ENCODE measurements at regions of chr12 and their contacts with region 1.

Region 1: GRCh38 chr12:67578976-67579661 is 69.4 kb upstream of the DYRK2 start:
- DNase-seq: peak in 6 of 14 experiments; percentile 4 to 88 (median 46)
- ATAC-seq: peak; percentile 79
- H3K4me3 ChIP-seq: peak overlapping the region; percentile 1
- H3K4me3 Mint-ChIP-seq: peak overlapping the region; percentile 58
- H3K27ac ChIP-seq: peak overlapping the region in 1 of 2 donors; percentile 32
- H3K27ac Mint-ChIP-seq: peak overlapping the region; percentile 22
- H3K4me1 ChIP-seq: peaks cover 22% of the 10 kb centered on the region
- H3K4me1 Mint-ChIP-seq: peaks cover 63% of the 10 kb centered on the region
- H3K27me3 ChIP-seq: no peaks in the 10 kb centered on the region
- H3K27me3 Mint-ChIP-seq: no peaks in the 10 kb centered on the region
- CTCF ChIP-seq: no peak

Region 2: DNA sequence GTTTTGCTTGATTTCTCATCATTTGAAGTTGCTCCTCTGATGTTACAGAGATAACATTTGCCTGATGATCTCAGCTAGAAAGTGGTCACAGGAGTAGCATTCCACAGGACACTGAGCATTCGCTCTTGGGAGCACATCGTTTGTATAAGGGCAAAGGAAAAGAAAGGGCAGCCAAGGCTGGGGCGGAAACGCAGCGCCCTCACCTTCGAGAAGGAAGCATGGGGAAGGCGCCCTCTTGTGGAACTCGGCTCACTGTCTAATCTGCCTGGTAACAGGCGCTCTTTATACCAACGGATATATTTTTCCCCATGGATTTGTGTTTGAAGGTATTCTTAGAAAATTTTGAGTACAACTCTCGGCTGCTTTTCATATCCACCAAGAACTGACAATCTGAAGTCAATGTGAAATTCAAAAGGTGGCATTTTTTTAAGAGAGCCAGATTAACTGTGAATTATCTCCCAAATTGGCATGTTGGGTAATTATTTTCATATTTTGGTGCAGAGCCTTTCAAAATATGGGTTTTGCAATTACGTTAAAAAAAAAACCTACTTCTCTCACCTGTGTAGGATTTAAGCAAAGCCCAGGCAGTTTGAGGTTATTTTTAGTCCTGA is 137.3 kb before region 1 on chr12:
- CTCF ChIA-PET with region 1: no interaction called
- POLR2A ChIA-PET with region 1: interaction called, 4 read pairs
- intact Hi-C with region 1: loop called in 1 of 2 experiments (anchors 2 kb)
- DNase-seq: peak; percentile 64 to 87 (median 74)
- ATAC-seq: peak; percentile 96
- H3K4me3 ChIP-seq: no peak overlapping the region
- H3K4me3 Mint-ChIP-seq: peak overlapping the region; percentile 77
- H3K27ac ChIP-seq: no peak overlapping the region
- H3K27ac Mint-ChIP-seq: peak overlapping the region; percentile 10
- H3K4me1 ChIP-seq: peaks cover 14% of the 10 kb centered on the region
- H3K4me1 Mint-ChIP-seq: peaks cover 32% of the 10 kb centered on the region
- H3K27me3 ChIP-seq: no peaks in the 10 kb centered on the region
- H3K27me3 Mint-ChIP-seq: no peaks in the 10 kb centered on the region
- CTCF ChIP-seq: peak; percentile 84

Region 3: GRCh38 chr12:67482751-67483671 is 96.1 kb before region 1 on chr12:
- CTCF ChIA-PET with region 1: no interaction called
- POLR2A ChIA-PET with region 1: interaction called, 10 read pairs
- intact Hi-C with region 1: no loop called
- DNase-seq: peak; percentile 58 to 95 (median 84)
- ATAC-seq: peak; percentile 92
- H3K4me3 ChIP-seq: no peak overlapping the region
- H3K4me3 Mint-ChIP-seq: peak overlapping the region; percentile 23
- H3K27ac ChIP-seq: peak overlapping the region; percentile 3 to 66
- H3K27ac Mint-ChIP-seq: peak overlapping the region; percentile 84
- H3K4me1 ChIP-seq: peaks cover 47% of the 10 kb centered on the region
- H3K4me1 Mint-ChIP-seq: peaks cover 52% of the 10 kb centered on the region
- H3K27me3 ChIP-seq: no peaks in the 10 kb centered on the region
- H3K27me3 Mint-ChIP-seq: no peaks in the 10 kb centered on the region
- CTCF ChIP-seq: no peak

Region 4: GRCh38 chr12:67592216-67593011 is 13.3 kb after region 1 on chr12:
- CTCF ChIA-PET with region 1: interaction called, 3 read pairs
- POLR2A ChIA-PET with region 1: interaction called, 65 read pairs
- intact Hi-C with region 1: loop called in 1 of 2 experiments (anchors 1 kb)
- DNase-seq: peak in 4 of 14 experiments; percentile 15 to 85 (median 48)
- ATAC-seq: no peak
- H3K4me3 ChIP-seq: no peak overlapping the region
- H3K4me3 Mint-ChIP-seq: peak overlapping the region; percentile 32
- H3K27ac ChIP-seq: peak overlapping the region in 1 of 2 donors; percentile 35
- H3K27ac Mint-ChIP-seq: peak overlapping the region; percentile 60
- H3K4me1 ChIP-seq: peaks cover 40% of the 10 kb centered on the region
- H3K4me1 Mint-ChIP-seq: peaks cover 68% of the 10 kb centered on the region
- H3K27me3 ChIP-seq: no peaks in the 10 kb centered on the region
- H3K27me3 Mint-ChIP-seq: no peaks in the 10 kb centered on the region
- CTCF ChIP-seq: no peak

Measured in CD4-positive, alpha-beta T cell (primary cell).